Caco-2 (cell line): ENCODE measurements at regions of chr2 and their contacts with region 1.

Region 1: GRCh38 chr2:113826346-113827285 is 63.3 kb upstream of the ACTR3 start:
- DNase-seq: peak; percentile 80 to 85
- H3K4me3 ChIP-seq: no peak overlapping the region
- H3K4me3 Mint-ChIP-seq: peak overlapping the region; percentile 39
- H3K27ac Mint-ChIP-seq: peak overlapping the region; percentile 92
- H3K4me1 ChIP-seq: peaks cover 54% of the 10 kb centered on the region
- H3K4me1 Mint-ChIP-seq: peaks cover 51% of the 10 kb centered on the region
- H3K27me3 ChIP-seq: no peaks in the 10 kb centered on the region
- H3K27me3 Mint-ChIP-seq: no peaks in the 10 kb centered on the region
- CTCF ChIP-seq: no peak

Region 2: DNA sequence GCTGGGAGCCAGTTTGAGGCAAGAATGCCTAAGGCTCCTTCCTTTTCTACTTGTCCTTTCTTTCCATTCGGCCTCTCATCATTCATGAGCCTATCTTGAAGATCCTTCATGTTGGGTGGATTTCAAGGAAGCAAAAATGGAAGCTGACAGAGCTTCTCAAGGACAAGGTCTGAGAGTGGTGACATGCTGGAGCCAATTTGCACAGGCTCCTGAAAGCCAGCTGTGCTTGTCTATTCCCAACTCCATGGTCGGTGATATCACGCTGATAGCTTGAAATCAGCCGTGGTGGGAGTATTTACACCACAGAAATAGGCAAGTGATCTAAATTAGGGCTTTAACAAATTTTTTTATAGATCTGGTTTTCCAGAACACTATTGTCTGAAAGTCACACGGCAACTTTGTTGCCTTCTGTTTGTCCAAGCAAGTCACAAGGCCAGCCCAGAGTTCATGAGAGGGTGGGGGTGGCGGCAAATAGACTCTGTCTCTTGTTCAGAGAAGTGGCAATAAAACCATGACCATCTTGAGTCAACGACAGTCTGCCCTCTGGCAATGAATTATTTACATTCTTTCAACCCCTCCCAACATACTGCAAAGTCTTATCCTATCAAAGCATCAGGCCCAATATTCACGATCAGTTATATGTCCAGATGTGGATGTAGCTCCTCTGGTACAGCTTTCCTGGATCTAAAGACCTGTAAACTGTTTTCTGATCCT is 20.2 kb before region 1 on chr2:
- CTCF ChIA-PET with region 1: no interaction called
- POLR2A ChIA-PET with region 1: no interaction called
- intact Hi-C with region 1: loop called (anchors 1 kb)
- DNase-seq: peak; percentile 79 to 90
- H3K4me3 ChIP-seq: no peak overlapping the region
- H3K4me3 Mint-ChIP-seq: no peak overlapping the region
- H3K27ac Mint-ChIP-seq: peak overlapping the region; percentile 81
- H3K4me1 ChIP-seq: peaks cover 52% of the 10 kb centered on the region
- H3K4me1 Mint-ChIP-seq: peaks cover 37% of the 10 kb centered on the region
- H3K27me3 ChIP-seq: no peaks in the 10 kb centered on the region
- H3K27me3 Mint-ChIP-seq: no peaks in the 10 kb centered on the region
- CTCF ChIP-seq: no peak

Region 3: GRCh38 chr2:113889471-113890252 is 63.0 kb after region 1 on chr2 and contains the start of gene ACTR3:
- CTCF ChIA-PET with region 1: interaction called, 3 read pairs
- POLR2A ChIA-PET with region 1: interaction called, 3 read pairs
- intact Hi-C with region 1: loop called (anchors 1 kb)
- DNase-seq: peak; percentile 98 to 99
- H3K4me3 ChIP-seq: peak within 1 kb of the TSS; percentile 98
- H3K4me3 Mint-ChIP-seq: peak within 1 kb of the TSS; percentile 80
- H3K27ac Mint-ChIP-seq: peak within 1 kb of the TSS; percentile 53
- H3K4me1 ChIP-seq: peaks cover 49% of the 10 kb centered on the region
- H3K4me1 Mint-ChIP-seq: peaks cover 54% of the 10 kb centered on the region
- H3K27me3 ChIP-seq: no peaks in the 10 kb centered on the region
- H3K27me3 Mint-ChIP-seq: no peaks in the 10 kb centered on the region
- CTCF ChIP-seq: no peak
- total RNA-seq, gene ACTR3: 340 and 341 TPM in 2 replicates

Region 4: GRCh38 chr2:114056294-114057143 is 229.9 kb after region 1 on chr2:
- CTCF ChIA-PET with region 1: no interaction called
- POLR2A ChIA-PET with region 1: no interaction called
- intact Hi-C with region 1: no loop called
- DNase-seq: no peak
- H3K4me3 ChIP-seq: no peak overlapping the region
- H3K4me3 Mint-ChIP-seq: no peak overlapping the region
- H3K27ac Mint-ChIP-seq: no peak overlapping the region
- H3K4me1 ChIP-seq: no peaks in the 10 kb centered on the region
- H3K4me1 Mint-ChIP-seq: no peaks in the 10 kb centered on the region
- H3K27me3 ChIP-seq: no peaks in the 10 kb centered on the region
- H3K27me3 Mint-ChIP-seq: no peaks in the 10 kb centered on the region
- CTCF ChIP-seq: no peak